ENCODE measurements at regions of chr5 and their contacts with region 1.

Region 1: GRCh38 chr5:59380350-59380951 is 513.1 kb downstream of the PDE4D start:
- DNase-seq: peak; percentile 30
- ATAC-seq: no peak
- H3K4me3 ChIP-seq: no peak overlapping the region
- H3K27ac ChIP-seq: no peak overlapping the region
- H3K4me1 ChIP-seq: no peaks in the 10 kb centered on the region
- H3K27me3 ChIP-seq: no peaks in the 10 kb centered on the region
- CTCF ChIP-seq: peak; percentile 41

Region 2: DNA sequence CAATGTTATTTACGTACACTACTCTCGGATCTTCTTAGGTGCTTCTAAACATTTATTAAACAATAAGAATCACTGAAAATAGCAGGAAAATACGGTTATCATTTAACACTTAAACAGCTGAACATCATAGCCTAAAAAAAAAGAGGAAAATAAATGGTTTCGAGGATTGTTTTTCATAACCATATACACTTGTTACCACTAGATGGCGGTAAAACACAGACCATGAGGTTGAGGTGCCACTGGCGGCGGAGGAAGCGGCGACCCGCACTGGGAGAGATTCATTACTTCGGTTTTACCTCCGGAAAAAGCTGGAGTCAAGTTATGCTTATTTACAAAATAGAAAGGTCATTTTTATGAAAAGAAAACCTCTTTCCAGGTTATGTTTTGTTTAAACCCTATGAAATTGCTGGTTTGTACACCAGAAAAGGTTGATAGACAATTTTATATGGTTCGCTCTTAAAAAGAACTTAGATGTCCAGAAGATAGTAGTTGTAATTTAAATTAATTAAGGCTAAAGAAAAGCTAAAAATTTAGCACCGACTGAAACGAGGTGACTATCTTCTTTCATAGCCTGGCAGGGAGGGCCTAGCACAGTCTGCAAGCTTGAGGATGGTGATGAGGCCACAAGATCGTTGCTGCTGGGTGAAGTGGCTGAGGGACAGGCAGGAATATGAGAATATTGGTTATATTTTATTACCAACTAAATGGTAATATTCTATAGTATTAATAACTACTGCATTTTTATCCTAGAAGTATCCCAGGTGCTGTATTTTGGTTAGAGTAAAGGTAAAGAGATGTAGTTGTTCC is 191.8 kb before region 1 on chr5:
- CTCF ChIA-PET with region 1: no interaction called
- POLR2A ChIA-PET with region 1: no interaction called
- intact Hi-C with region 1: loop called (anchors 1 kb)
- DNase-seq: peak; percentile 28
- ATAC-seq: peak; percentile 48; the same call in 1 of the 2 replicates
- H3K4me3 ChIP-seq: no peak overlapping the region
- H3K27ac ChIP-seq: no peak overlapping the region
- H3K4me1 ChIP-seq: peaks cover 3% of the 10 kb centered on the region; the same call in 1 of the 2 replicates
- H3K27me3 ChIP-seq: no peaks in the 10 kb centered on the region
- CTCF ChIP-seq: peak; percentile 40; the same call in 1 of the 2 replicates